SK-N-SH (cell line): ENCODE measurements at regions of chr5 and their contacts with region 1.

Region 1: DNA sequence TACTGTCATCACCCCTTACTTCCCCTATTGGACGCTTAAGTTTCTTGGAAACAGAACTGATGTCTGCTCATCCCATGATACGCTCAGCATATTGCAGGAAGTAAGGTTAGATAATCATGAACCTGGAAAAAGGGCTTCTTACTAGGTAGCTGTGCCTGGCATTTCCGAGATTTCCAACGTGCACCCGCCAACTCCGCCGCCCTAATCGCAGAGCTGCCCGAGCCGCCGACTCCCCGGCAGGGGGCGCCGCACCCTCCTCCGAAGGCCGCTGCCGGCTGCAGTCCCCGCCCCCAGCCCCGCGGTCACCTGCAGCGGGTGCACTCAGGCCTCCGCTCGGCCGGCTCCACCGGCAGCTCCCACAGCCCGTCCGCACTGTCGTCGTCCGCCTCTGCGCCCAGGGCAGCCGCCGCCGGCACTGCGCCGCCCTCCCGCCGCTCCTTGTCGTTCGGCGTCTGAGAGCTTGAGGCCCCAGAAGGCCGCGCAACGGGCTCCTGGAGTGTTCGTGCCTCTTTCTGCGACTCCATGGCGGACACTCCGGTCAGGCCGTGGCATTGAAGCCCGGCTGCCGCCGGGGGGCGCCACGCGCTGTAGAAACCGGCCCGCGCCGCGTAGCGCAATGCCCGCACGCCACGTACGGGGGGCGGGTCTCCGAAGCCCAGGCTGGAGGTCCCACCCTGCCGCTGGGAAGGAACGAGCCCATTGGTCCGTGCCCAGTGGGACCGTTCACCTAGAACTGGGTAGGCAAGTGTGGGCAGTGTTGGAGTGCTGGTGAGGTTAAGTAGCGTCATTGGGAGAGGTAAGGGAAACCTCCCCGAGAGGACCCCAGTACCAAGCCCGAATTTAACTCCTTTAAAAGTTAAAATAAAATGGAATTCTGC is at the start of gene DTWD2:
- DNase-seq: peak; percentile 96
- H3K4me3 ChIP-seq: peak within 1 kb of the TSS; percentile 78 to 87
- H3K27ac ChIP-seq: peak within 1 kb of the TSS; percentile 73 to 95
- H3K4me1 ChIP-seq: peaks cover 3 to 18% of the 10 kb centered on the region in 2 experiments; a peak in 3 of 4 replicates
- H3K27me3 ChIP-seq: no peaks in the 10 kb centered on the region
- CTCF ChIP-seq: peak; percentile 89
- EP300 ChIP-seq: no peak
- RAD21 ChIP-seq: peak; percentile 77
- polyA plus RNA-seq, gene DTWD2: 2.4 and 2.5 TPM in 2 replicates

Region 2: GRCh38 chr5:118883396-118883795 is 104.8 kb before region 1 on chr5:
- CTCF ChIA-PET with region 1: no interaction called
- POLR2A ChIA-PET with region 1: no interaction called
- DNase-seq: no peak
- H3K4me3 ChIP-seq: no peak overlapping the region
- H3K27ac ChIP-seq: no peak overlapping the region
- H3K4me1 ChIP-seq: no peaks in the 10 kb centered on the region
- H3K27me3 ChIP-seq: no peaks in the 10 kb centered on the region
- CTCF ChIP-seq: no peak
- EP300 ChIP-seq: no peak
- RAD21 ChIP-seq: no peak

Region 3: GRCh38 chr5:118999696-119000095 is 11.5 kb after region 1 on chr5:
- CTCF ChIA-PET with region 1: interaction called, 14 read pairs
- POLR2A ChIA-PET with region 1: interaction called, 3 read pairs
- DNase-seq: no peak
- H3K4me3 ChIP-seq: no peak overlapping the region
- H3K27ac ChIP-seq: no peak overlapping the region
- H3K4me1 ChIP-seq: no peaks in the 10 kb centered on the region
- H3K27me3 ChIP-seq: no peaks in the 10 kb centered on the region
- CTCF ChIP-seq: no peak
- EP300 ChIP-seq: no peak
- RAD21 ChIP-seq: no peak

Region 4: GRCh38 chr5:119255571-119256356 is 267.5 kb after region 1 on chr5:
- CTCF ChIA-PET with region 1: interaction called, 13 read pairs
- POLR2A ChIA-PET with region 1: no interaction called
- DNase-seq: no peak
- H3K4me3 ChIP-seq: no peak overlapping the region
- H3K27ac ChIP-seq: no peak overlapping the region
- H3K4me1 ChIP-seq: no peaks in the 10 kb centered on the region
- H3K27me3 ChIP-seq: no peaks in the 10 kb centered on the region
- CTCF ChIP-seq: peak; percentile 28; the same call in 1 of the 2 replicates
- EP300 ChIP-seq: no peak
- RAD21 ChIP-seq: peak; percentile 35

Region 5: DNA sequence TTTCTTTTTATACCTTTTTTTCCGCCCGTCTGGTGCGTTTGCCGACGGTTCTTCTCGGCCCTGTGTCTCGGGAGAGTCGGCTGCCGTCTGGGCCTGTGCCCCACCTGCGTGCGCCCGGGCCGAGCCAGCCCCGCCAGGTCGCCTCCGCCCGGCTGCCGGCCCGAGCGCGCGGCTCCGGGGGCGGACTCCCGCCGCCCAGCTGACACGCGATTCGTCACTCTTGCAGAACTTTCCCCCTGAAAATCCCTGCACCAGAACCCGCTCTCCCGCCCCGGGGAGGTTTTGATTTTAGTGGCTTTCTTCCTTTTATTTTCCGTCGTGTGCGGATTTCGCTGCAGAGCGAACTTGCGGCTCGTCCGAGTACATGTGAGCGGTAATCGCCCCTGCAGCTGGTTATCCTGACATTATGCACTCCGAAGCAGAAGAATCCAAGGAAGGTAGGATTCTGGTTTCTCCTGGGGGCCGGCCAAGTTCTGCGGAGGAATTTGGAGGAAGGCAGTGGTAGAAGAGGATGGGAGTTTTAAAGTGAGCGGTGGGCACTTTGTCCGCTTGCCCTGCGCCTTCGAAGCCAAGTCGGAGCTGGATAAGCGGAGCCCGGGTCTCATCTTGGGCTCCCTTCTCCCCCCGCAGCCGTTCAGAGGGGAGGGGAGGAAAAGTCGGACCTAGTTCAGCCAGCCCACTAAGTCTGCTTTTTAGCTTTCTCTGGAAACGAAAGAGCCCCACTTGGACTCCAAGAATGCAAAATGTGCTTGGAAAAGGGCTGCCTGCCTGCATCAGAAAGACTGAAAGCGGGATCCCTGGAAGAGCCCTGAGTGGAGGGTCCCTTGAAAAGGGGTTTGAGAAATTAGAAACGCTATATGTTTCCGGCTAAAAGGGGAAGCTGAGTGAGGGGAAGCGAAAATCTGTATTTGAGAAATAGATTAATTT is 367.7 kb after region 1 on chr5 and contains the start of gene TNFAIP8:
- CTCF ChIA-PET with region 1: interaction called, 11 read pairs
- POLR2A ChIA-PET with region 1: no interaction called
- DNase-seq: peak; percentile 63
- H3K4me3 ChIP-seq: peak within 1 kb of the TSS; percentile 45 to 53
- H3K27ac ChIP-seq: no peak within 1 kb of the TSS; a peak in 1 of 4 replicates
- H3K4me1 ChIP-seq: peaks cover 0 to 4% of the 10 kb centered on the region in 2 experiments; a peak in 2 of 4 replicates
- H3K27me3 ChIP-seq: no peaks in the 10 kb centered on the region
- CTCF ChIP-seq: no peak
- EP300 ChIP-seq: no peak
- RAD21 ChIP-seq: no peak
- polyA plus RNA-seq, gene TNFAIP8: 28.3 and 31.3 TPM in 2 replicates

Region 6: GRCh38 chr5:119373449-119373858 is 385.2 kb after region 1 on chr5:
- CTCF ChIA-PET with region 1: interaction called, 14 read pairs
- POLR2A ChIA-PET with region 1: no interaction called
- DNase-seq: no peak
- H3K4me3 ChIP-seq: no peak overlapping the region
- H3K27ac ChIP-seq: no peak overlapping the region
- H3K4me1 ChIP-seq: peaks cover 0 to 16% of the 10 kb centered on the region in 2 experiments
- H3K27me3 ChIP-seq: no peaks in the 10 kb centered on the region
- CTCF ChIP-seq: no peak
- EP300 ChIP-seq: no peak
- RAD21 ChIP-seq: no peak

Region 7: DNA sequence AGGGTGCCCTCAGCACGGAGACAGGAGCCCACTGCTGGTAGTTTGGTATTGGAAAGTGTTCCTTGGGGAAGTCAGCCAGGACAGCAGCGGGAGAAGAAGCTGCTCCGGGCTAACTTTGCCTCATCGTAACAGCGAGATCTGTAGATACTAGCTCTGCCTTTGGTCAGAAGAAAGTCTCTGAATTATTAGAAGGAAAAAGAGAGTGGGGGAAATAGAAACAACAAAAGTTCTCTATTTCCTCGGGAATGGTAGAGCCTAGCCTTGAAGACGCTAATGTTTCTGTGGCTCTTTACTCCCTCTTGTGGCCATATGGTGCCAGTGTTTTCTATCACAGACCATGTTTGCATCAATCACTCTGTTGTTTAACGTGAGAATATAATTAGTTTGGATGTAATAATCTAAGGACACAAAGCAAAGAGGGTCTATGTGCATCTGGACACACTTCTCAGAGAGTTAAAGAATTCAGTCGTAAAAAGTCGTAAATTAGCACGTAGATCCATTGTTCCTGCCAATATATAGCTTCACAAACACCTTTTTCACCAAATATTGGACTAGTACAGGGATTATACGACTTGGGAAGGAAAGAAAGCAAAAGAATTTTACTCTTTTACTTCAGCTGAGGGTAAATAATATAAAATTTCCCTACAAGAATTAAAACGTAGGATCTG is 423.8 kb after region 1 on chr5:
- CTCF ChIA-PET with region 1: interaction called, 175 read pairs
- POLR2A ChIA-PET with region 1: interaction called, 10 read pairs
- DNase-seq: peak; percentile 58
- H3K4me3 ChIP-seq: peak overlapping the region; percentile 57 to 62
- H3K27ac ChIP-seq: peak overlapping the region; percentile 80 to 82
- H3K4me1 ChIP-seq: peaks cover 0 to 14% of the 10 kb centered on the region in 2 experiments; a peak in 3 of 4 replicates
- H3K27me3 ChIP-seq: no peaks in the 10 kb centered on the region
- CTCF ChIP-seq: peak; percentile 97
- EP300 ChIP-seq: no peak
- RAD21 ChIP-seq: peak; percentile 91

Region 8: GRCh38 chr5:119435436-119436132 is 447.4 kb after region 1 on chr5:
- CTCF ChIA-PET with region 1: interaction called, 11 read pairs
- POLR2A ChIA-PET with region 1: no interaction called
- DNase-seq: no peak
- H3K4me3 ChIP-seq: no peak overlapping the region
- H3K27ac ChIP-seq: no peak overlapping the region
- H3K4me1 ChIP-seq: no peaks in the 10 kb centered on the region
- H3K27me3 ChIP-seq: no peaks in the 10 kb centered on the region
- CTCF ChIP-seq: peak; percentile 59
- EP300 ChIP-seq: no peak
- RAD21 ChIP-seq: peak; percentile 46